ENCODE measurements at regions of chr4 and their contacts with region 1.

Region 1: GRCh38 chr4:52234561-52235440 is 183.7 kb downstream of the SPATA18 start:
- DNase-seq: peak in 4 of 7 donors; percentile 2 to 53 (median 20)
- H3K4me3 ChIP-seq: no peak overlapping the region
- H3K27ac ChIP-seq: no peak overlapping the region
- H3K4me1 ChIP-seq: no peaks in the 10 kb centered on the region
- H3K27me3 ChIP-seq: no peaks in the 10 kb centered on the region
- CTCF ChIP-seq: peak; percentile 35 to 78 (median 64)
- POLR2A ChIP-seq: no peak

Region 2: DNA sequence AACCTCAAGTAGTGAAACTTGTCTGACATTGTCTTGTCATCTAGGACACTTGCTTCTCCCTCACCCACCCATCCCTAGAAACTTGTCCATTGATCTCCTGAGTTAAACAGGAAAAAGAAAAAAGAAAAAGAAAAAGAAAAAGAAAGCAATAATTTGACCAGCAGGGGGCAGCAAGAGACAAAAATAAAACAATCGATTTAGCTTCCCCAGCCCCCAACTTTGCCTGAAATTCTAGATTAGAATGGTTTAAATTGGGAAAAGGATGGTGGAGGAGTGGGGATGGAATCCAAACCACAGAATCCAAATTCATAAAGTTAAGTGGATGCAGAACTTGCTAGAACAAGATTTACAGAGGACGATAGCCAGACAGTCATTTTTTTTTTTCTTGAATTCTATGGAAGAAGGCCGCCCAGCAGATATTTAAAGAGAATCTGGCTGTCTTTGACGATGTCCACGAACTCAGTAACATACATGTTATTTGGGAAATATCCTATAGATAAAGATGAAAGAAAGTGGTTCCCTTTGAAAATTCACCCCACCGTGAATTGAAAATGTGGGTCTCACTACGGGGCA is 141.4 kb after region 1 on chr4:
- intact Hi-C with region 1: loop called in 1 of 2 experiments (anchors 10 kb)
- DNase-seq: peak in 5 of 7 donors; percentile 23 to 57 (median 49)
- H3K4me3 ChIP-seq: no peak overlapping the region
- H3K27ac ChIP-seq: no peak overlapping the region
- H3K4me1 ChIP-seq: no peaks in the 10 kb centered on the region
- H3K27me3 ChIP-seq: no peaks in the 10 kb centered on the region
- CTCF ChIP-seq: peak; percentile 59 to 82 (median 71)
- POLR2A ChIP-seq: no peak

Region 3: DNA sequence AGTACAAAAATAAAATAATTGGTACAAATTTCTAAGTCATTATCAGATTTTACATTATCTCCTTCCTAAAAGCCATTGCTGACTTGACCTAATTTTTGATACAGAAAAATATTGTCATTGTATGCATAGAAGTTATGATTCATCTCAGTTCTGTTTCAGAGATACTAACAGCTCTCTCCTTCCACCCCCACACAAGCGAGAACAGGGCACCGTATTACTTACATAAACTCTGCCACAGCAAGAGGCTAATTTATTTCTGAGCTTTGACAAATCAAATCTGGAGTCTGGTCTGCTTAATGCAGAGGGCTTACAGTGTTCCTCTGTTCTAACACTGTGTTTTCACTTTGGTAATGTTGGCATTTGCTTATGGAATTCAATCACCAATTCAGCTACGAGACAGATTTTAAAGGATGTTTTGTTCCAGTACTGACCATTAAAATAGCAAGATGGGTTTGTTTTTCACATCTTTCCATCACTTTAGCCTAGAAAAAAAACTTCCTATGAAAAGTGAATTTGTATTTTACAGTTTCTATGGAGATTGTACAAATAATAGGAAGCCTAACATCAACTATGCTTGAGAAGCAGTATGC is 242.5 kb after region 1 on chr4:
- intact Hi-C with region 1: no loop called
- DNase-seq: no peak
- H3K4me3 ChIP-seq: no peak overlapping the region
- H3K27ac ChIP-seq: no peak overlapping the region
- H3K4me1 ChIP-seq: no peaks in the 10 kb centered on the region
- H3K27me3 ChIP-seq: no peaks in the 10 kb centered on the region
- CTCF ChIP-seq: no peak
- POLR2A ChIP-seq: no peak

Region 4: DNA sequence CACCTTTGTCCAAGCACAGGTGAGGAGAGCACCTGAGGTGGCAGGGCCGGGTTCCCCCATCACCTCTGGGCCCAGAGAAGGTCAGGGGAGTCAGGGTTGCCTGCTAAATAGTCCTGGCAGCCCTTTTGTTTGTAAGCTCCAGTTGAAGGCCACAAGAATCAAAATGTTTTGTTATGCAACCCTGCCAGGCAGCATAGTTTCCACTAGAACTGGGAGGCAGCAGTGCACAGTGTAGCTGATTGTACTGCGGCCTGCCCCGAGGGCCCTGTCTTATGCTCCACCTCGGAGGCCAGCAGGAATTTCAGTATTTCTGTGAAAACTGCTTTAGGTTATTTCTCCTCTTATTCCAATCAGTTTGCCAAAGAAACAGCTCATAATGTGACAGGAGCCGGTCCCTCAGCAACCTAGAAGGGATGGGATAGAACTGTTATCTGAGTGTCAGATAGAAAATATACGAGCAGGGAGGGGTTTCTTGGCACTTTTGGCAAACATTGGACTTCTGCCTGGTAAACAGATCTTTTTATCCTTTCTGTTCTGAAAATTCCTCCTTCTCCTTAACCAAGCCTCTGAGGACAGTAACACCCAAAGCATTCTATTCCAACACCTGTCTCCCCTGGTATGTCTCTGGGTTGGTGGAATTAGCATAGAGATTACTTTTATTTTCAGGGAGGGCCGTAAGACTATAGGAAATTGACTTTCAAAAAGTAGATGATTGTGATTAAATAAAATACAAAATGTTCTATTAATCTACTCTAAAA is 1262.9 kb after region 1 on chr4:
- intact Hi-C with region 1: no loop called
- DNase-seq: peak; percentile 61 to 87 (median 81)
- H3K4me3 ChIP-seq: no peak overlapping the region
- H3K27ac ChIP-seq: peak overlapping the region; percentile 35 to 79 (median 77)
- H3K4me1 ChIP-seq: peaks cover 4 to 36% of the 10 kb centered on the region in 2 donors
- H3K27me3 ChIP-seq: no peaks in the 10 kb centered on the region
- CTCF ChIP-seq: peak in 2 of 6 experiments; percentile 21 to 28
- POLR2A ChIP-seq: peak in 1 of 2 donors; percentile 23